A673 (cell line): ENCODE measurements at regions of chr3 and their contacts with region 1.

Region 1: DNA sequence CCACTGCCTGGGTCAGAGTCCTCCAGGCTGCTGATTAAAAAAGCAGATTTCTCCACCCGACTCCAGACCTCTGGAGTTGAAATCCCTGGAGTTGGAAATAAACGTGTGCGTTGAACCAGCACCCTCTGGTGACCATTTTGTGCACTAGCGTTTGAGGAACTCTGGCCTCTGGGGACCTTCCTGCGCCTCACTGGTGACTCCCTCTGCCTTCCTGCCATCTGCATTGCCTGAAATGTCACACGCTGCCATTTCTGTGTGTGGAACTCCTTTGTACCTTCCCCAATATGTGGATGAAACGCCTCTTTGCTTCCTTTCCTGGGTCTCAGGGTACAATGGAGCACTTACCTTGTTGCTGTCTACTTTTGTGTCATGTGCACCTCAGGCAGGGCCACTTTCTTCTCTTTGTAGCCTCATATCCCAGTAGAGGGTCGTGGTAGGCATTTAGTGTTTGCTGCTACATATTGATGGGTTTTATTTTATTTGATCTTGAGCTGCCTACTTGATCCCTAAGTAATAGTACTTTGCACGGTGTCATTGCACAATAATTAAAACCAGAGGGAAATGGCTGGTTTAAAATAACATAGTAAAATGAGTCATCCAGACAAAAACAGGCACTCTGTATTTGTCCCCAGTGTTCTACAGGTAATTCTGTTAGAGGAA is 56.8 kb downstream of the GPR171 start:
- DNase-seq: peak; percentile 88
- H3K4me3 ChIP-seq: no peak overlapping the region
- H3K27ac ChIP-seq: no peak overlapping the region
- H3K4me1 ChIP-seq: peaks cover 8% of the 10 kb centered on the region
- H3K27me3 ChIP-seq: peaks cover 7% of the 10 kb centered on the region
- CTCF ChIP-seq: peak; percentile 91

Region 2: DNA sequence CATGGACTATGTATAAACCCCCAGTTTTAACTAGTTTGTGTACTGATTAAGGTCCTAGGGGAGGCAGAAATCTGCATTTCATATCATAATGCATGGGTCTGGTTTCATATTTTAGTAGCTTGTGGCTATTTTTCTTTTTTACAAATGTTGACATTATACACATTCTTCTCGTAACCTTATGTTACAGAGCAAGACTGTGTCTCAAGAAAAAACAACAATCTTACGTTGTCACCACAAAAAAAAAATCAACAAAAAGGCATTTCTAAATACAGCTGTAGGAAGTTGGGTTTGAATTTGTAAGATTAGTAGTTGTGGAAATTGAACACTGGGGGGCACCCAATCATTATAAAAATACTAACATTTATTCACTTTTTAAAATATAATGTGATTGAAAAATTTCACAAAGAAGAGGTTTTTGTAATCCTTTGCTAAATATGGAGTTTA is 617.8 kb before region 1 on chr3:
- CTCF ChIA-PET with region 1: no interaction called
- POLR2A ChIA-PET with region 1: no interaction called
- intact Hi-C with region 1: loop called (anchors 5 kb)
- DNase-seq: peak; percentile 21
- H3K4me3 ChIP-seq: no peak overlapping the region
- H3K27ac ChIP-seq: no peak overlapping the region
- H3K4me1 ChIP-seq: no peaks in the 10 kb centered on the region
- H3K27me3 ChIP-seq: no peaks in the 10 kb centered on the region
- CTCF ChIP-seq: peak; percentile 55

Region 3: DNA sequence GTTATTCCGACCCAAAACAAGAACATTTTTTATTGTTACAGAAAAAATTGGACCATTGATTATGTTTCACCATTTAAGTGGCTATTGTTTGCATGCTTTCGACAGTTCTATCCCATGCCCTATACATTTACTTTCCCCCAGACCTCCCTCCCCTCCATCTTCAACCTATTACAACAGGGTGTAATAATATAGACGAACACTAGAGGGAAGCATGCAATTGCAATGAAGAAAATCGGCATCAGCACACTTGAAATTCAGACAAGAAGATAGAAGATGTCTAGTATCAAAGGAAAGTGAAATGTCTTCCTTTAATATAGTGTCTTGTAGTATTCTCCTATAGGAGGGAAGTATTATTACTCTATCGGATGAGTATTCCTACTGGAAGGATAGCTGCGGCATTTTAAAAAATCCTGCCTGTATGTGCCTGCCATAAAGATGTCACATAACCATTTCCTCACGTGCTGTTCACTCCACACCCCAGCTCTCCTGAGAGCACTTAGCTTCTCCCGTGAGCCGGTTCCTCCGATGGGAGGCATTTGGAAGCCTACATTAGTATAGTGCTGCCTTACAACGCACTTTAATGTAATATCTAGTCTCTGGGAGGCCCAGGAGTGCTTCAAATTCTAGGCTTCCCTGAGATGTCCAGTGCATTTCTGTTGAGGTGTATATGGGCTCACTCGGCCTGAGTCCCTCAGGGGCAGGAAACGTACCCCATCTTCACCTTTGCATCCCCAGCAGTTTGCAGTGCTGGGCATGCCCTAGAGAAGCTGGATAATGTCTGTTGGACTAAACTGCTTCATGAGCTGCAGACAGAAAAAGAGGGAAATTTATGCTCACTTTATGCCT is 424.7 kb before region 1 on chr3:
- CTCF ChIA-PET with region 1: no interaction called
- POLR2A ChIA-PET with region 1: no interaction called
- intact Hi-C with region 1: loop called (anchors 1 kb)
- DNase-seq: peak; percentile 84
- H3K4me3 ChIP-seq: no peak overlapping the region
- H3K27ac ChIP-seq: no peak overlapping the region
- H3K4me1 ChIP-seq: peaks cover 11% of the 10 kb centered on the region
- H3K27me3 ChIP-seq: no peaks in the 10 kb centered on the region
- CTCF ChIP-seq: peak; percentile 82

Region 4: DNA sequence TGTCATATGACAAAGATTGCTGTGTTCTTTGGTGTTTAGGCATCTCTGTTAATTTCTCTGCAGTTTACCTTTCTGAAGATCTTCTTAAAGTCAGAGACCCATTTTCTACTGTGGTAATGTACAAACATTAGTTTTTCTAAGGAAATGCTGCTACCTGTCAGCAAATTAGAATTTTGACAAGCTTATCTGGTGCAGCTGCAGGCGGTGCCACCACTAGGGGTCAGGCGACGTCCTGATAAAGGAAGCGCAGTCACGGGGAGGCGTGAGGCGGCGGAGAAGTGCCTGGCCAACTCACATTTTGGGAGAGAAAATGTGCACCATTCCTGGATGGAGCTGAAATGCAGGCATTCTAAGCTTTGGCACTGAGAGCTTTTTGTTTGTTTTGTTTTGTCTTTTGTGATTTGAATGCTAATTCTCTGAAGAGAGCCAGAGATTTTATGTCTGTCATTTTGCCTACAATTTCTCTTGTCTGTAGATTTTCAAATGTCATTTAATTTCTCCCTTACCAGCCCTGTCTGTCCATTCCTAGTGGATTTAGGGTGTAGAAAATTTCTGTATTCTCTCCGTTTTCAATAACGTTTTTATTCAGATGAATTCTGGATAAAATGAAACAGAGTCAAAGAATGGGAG is 358.3 kb before region 1 on chr3:
- CTCF ChIA-PET with region 1: interaction called, 3 read pairs
- POLR2A ChIA-PET with region 1: no interaction called
- intact Hi-C with region 1: loop called (anchors 5 kb)
- DNase-seq: peak; percentile 84
- H3K4me3 ChIP-seq: no peak overlapping the region
- H3K27ac ChIP-seq: no peak overlapping the region
- H3K4me1 ChIP-seq: no peaks in the 10 kb centered on the region
- H3K27me3 ChIP-seq: no peaks in the 10 kb centered on the region
- CTCF ChIP-seq: peak; percentile 97

Region 5: DNA sequence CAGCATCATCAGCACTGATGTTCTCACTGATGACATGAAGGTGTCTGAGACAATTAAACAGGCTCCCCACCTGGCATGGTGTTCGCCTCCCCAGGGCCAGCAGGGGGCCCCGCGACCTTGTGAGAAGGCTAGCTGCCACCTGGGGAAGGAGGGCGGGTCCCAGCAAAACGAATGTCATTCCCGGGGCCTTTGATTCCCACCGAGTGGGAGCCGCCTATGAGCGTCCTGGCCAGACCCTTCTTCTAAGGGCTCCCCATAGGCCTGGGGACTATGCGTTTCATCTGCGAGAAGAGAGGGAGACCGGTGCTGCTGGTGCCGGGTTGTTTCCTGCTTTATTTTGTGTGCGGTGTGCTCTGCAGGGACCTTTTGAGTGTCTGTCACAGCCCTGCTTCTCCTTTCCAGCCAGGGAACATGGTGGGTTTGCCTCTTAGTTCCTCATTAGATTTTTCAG is 220.4 kb before region 1 on chr3:
- CTCF ChIA-PET with region 1: no interaction called
- POLR2A ChIA-PET with region 1: no interaction called
- intact Hi-C with region 1: loop called (anchors 1 kb)
- DNase-seq: peak; percentile 39
- H3K4me3 ChIP-seq: no peak overlapping the region
- H3K27ac ChIP-seq: no peak overlapping the region
- H3K4me1 ChIP-seq: no peaks in the 10 kb centered on the region
- H3K27me3 ChIP-seq: peaks cover 9% of the 10 kb centered on the region
- CTCF ChIP-seq: peak; percentile 61

Region 6: GRCh38 chr3:151008699-151009098 is 137.5 kb before region 1 on chr3:
- CTCF ChIA-PET with region 1: no interaction called
- POLR2A ChIA-PET with region 1: no interaction called
- intact Hi-C with region 1: loop called (anchors 1 kb)
- DNase-seq: peak; percentile 53
- H3K4me3 ChIP-seq: no peak overlapping the region
- H3K27ac ChIP-seq: no peak overlapping the region
- H3K4me1 ChIP-seq: peaks cover 11% of the 10 kb centered on the region
- H3K27me3 ChIP-seq: peaks cover 4% of the 10 kb centered on the region
- CTCF ChIP-seq: peak; percentile 56